Activated CD4-positive, alpha-beta T cell treated with anti-CD3 and anti-CD28 coated beads for 36 hours (primary cell): ENCODE measurements at regions of chr3 and their contacts with region 1.

Region 1: GRCh38 chr3:171772427-171773056 is 37.7 kb downstream of the PLD1 start:
- DNase-seq: peak; percentile 71
- ATAC-seq: peak; percentile 47
- H3K4me3 Mint-ChIP-seq: no peak overlapping the region
- H3K27ac Mint-ChIP-seq: no peak overlapping the region
- H3K4me1 Mint-ChIP-seq: no peaks in the 10 kb centered on the region
- H3K27me3 Mint-ChIP-seq: peaks cover 5% of the 10 kb centered on the region

Region 2: DNA sequence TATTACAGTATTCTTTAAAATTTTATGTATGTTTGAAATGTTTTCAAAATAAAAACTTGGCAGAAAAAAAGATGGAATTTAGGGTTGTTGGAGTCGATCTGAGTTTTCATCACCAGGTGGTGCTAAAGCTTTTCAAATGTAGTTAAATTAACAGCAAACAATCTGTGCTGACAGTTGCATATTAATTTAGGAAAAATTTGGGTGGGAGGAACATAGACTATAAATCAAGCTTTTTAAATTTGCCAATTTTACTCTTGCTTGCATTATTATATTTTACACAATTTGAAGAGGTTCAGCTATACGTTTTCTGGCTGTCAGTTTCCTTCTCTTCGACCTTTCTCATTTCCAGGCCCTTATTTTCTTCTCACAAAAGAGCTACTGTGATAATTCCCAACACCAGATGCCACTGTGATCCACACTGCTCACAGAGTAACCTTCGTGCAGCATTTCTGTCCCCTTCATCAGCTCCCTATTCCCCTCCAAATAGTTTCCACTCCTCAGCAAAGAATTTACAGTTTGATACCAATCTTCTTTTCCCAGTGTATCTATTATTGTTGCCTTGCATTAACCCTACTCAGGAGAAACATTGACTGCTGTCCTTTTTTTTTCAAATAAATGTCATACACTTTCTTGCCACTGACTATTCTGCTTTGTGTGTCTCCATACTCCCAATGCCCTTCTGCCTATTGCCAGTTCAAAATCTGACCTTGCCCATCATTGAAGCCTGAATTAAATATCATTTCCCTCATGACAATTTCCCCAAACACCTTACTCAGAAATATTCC is 810.7 kb before region 1 on chr3:
- CTCF ChIA-PET with region 1: interaction called, 12 read pairs
- POLR2A ChIA-PET with region 1: no interaction called
- intact Hi-C with region 1: loop called (anchors 1 to 5 kb)
- DNase-seq: peak; percentile 7
- ATAC-seq: no peak
- H3K4me3 Mint-ChIP-seq: no peak overlapping the region
- H3K27ac Mint-ChIP-seq: no peak overlapping the region
- H3K4me1 Mint-ChIP-seq: no peaks in the 10 kb centered on the region
- H3K27me3 Mint-ChIP-seq: peaks cover 2% of the 10 kb centered on the region

Region 3: DNA sequence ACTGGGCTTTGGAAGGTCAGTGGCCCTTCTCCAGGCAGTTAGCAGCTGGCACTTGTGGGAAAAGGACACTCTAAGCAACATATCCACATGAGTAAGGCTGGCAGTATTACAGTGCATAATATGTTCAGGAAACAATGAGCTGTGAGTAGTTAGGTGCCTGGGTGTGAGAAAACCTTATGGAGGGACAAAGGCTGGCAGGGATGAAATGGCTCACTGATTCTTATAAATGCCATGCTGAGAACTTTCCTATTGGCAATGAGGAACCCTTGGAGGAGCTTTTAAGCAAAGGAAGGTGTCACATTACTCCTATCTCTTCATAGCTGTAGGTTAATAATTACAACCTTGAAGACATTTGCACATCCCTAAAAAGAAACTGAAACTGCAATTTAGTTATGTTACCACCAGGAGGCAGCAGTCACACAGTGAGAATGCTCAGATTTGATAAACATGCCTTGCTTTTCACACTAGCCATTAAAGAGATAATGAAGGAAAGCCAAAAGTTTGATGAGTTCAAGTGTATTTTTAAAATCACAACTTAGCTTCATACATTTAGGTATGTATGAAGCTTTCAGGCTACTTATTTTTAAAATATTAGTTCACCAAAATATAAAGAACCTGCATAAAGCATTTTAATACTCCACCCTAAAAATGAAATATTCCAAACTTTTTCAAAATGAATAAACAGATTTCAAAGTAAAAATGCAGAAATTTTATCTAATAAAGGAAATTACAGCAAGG is 609.4 kb before region 1 on chr3:
- CTCF ChIA-PET with region 1: interaction called, 4 read pairs
- POLR2A ChIA-PET with region 1: no interaction called
- intact Hi-C with region 1: loop called in 1 of 2 experiments (anchors 10 kb)
- DNase-seq: peak; percentile 25
- ATAC-seq: no peak
- H3K4me3 Mint-ChIP-seq: no peak overlapping the region
- H3K27ac Mint-ChIP-seq: no peak overlapping the region
- H3K4me1 Mint-ChIP-seq: peaks cover 28% of the 10 kb centered on the region
- H3K27me3 Mint-ChIP-seq: no peaks in the 10 kb centered on the region

Region 4: GRCh38 chr3:171614318-171614921 is 158.1 kb before region 1 on chr3:
- CTCF ChIA-PET with region 1: interaction called, 16 read pairs
- POLR2A ChIA-PET with region 1: no interaction called
- intact Hi-C with region 1: loop called in 1 of 2 experiments (anchors 1 kb)
- DNase-seq: peak; percentile 34
- ATAC-seq: no peak
- H3K4me3 Mint-ChIP-seq: no peak overlapping the region
- H3K27ac Mint-ChIP-seq: no peak overlapping the region
- H3K4me1 Mint-ChIP-seq: no peaks in the 10 kb centered on the region
- H3K27me3 Mint-ChIP-seq: peaks cover 4% of the 10 kb centered on the region

Region 5: DNA sequence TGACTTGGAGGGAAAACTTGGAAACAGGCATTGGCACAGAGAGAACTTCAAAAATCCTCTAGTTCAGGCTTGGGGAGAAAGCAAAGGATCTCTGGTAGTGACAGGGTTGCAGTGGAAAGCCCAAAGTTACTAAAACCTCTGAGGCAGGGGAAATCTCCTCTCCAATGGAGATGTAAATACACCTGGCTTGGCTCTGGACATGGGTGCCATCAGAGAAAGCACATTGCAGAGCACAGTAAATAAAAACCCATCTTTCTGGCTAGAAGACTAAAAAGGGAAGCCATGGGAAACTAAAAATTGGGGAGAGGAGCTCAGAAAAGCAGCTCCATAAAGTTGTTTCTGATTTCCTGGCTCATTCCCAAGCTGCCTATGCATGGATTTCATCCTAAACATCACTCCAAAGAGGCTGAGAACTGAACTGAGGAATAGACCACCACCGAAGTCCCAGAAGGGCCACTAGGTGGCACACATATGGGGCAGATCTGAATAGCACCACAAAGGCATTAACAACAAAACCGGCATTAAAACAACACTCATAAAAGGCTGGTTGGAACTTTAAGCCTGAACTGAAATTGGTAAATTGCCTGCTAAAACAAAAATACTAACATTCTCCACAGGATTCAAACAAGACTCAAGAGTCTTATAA is 68.7 kb before region 1 on chr3:
- CTCF ChIA-PET with region 1: interaction called, 21 read pairs
- POLR2A ChIA-PET with region 1: no interaction called
- intact Hi-C with region 1: loop called (anchors 1 kb)
- DNase-seq: peak; percentile 39
- ATAC-seq: no peak
- H3K4me3 Mint-ChIP-seq: no peak overlapping the region
- H3K27ac Mint-ChIP-seq: no peak overlapping the region
- H3K4me1 Mint-ChIP-seq: no peaks in the 10 kb centered on the region
- H3K27me3 Mint-ChIP-seq: peaks cover 8% of the 10 kb centered on the region